ENCODE measurements at regions of chr6 and their contacts with region 1.

Region 1: GRCh38 chr6:106608062-106608668 is 21.1 kb downstream of the RTN4IP1 start:
- DNase-seq: no peak
- ATAC-seq: peak; percentile 89
- H3K4me3 Mint-ChIP-seq: no peak overlapping the region
- H3K27ac Mint-ChIP-seq: no peak overlapping the region
- H3K4me1 Mint-ChIP-seq: peaks cover 40% of the 10 kb centered on the region
- H3K27me3 Mint-ChIP-seq: no peaks in the 10 kb centered on the region; the same call in 1 of the 2 replicates
- CTCF ChIP-seq: peak; percentile 73

Region 2: GRCh38 chr6:106421496-106421895 is 186.7 kb before region 1 on chr6:
- CTCF ChIA-PET with region 1: no interaction called
- POLR2A ChIA-PET with region 1: no interaction called
- DNase-seq: no peak
- ATAC-seq: no peak
- H3K4me3 Mint-ChIP-seq: no peak overlapping the region
- H3K27ac Mint-ChIP-seq: no peak overlapping the region
- H3K4me1 Mint-ChIP-seq: peaks cover 12% of the 10 kb centered on the region
- H3K27me3 Mint-ChIP-seq: no peaks in the 10 kb centered on the region
- CTCF ChIP-seq: no peak

Region 3: DNA sequence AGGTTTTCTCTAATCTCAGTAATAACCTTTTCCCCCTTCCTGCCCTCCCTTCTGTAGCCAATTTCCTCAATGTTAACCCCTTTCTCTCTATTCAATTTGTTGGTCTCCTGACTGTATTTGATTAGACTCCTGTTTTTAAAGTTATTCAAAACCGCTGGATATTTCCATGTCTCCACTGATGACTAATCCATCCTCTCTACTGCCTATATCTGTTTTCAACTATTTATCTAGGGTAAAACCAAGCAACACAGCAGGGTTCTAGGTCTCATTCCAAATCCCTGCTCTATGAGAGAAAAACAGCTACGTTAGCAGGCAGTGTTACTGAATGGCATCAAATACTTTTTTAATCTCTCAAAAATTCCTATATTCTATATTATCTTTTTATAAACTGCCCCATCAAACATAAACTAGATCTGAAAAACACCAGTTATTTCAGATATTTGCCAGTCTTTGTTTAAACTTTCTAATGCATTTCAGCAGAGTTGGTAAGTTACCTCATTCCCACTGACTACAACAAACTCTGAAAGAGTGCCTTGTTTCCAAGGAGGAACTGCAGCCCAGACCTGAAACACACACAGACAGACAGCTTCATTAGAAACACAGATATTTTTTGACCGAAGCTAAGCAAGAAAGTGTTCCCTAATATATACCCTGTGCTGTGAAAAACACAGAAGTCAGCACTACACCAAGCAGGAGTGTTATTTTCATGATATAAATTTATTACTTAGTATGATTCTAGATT is 12.9 kb after region 1 on chr6:
- CTCF ChIA-PET with region 1: interaction called, 10 read pairs
- POLR2A ChIA-PET with region 1: no interaction called
- DNase-seq: no peak
- ATAC-seq: no peak; the same call in 1 of the 2 replicates
- H3K4me3 Mint-ChIP-seq: no peak overlapping the region
- H3K27ac Mint-ChIP-seq: peak overlapping the region; percentile 84; the same call in 1 of the 2 replicates
- H3K4me1 Mint-ChIP-seq: peaks cover 43% of the 10 kb centered on the region
- H3K27me3 Mint-ChIP-seq: no peaks in the 10 kb centered on the region
- CTCF ChIP-seq: no peak